ENCODE measurements at regions of chr1 and their contacts with region 1.

Region 1: GRCh38 chr1:85259118-85259911 is at the start of gene C1orf52:
- DNase-seq: peak; percentile 90
- ATAC-seq: peak; percentile 94
- H3K4me3 ChIP-seq: peak within 1 kb of the TSS; percentile 83
- H3K27ac ChIP-seq: peak within 1 kb of the TSS; percentile 85
- H3K4me1 ChIP-seq: peaks cover 3% of the 10 kb centered on the region; the same call in 1 of the 2 replicates
- H3K27me3 ChIP-seq: no peaks in the 10 kb centered on the region
- CTCF ChIP-seq: peak; percentile 95
- POLR2A ChIP-seq: peak; percentile 81
- RAD21 ChIP-seq: peak; percentile 58
- total RNA-seq, gene C1orf52: 16.3 and 23.1 TPM in 2 replicates

Region 2: DNA sequence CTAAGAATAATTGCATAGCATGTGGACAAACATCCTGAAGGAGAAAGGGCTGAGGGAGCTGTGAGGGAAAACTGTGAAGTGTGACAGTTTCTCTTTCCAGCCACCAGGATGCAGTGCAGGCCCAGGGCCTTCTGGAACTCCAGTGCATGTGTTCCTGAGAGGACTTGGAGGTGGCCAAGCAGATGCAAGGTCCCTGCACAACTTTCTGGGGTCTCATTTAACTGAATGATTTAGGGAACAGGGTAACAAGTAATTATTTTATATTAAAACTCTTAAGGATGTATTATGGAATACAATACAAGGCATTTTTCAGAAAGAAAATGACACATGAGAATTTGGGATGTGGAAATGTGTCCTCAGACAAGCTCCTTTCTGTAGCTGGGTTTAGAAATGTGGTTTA is 149.8 kb before region 1 on chr1:
- CTCF ChIA-PET with region 1: interaction called, 20 read pairs
- POLR2A ChIA-PET with region 1: no interaction called
- dilution Hi-C with region 1: no loop called
- in situ Hi-C with region 1: no loop called
- intact Hi-C with region 1: loop called (anchors 1 kb)
- DNase-seq: peak; percentile 75
- ATAC-seq: peak; percentile 99
- H3K4me3 ChIP-seq: no peak overlapping the region
- H3K27ac ChIP-seq: no peak overlapping the region
- H3K4me1 ChIP-seq: no peaks in the 10 kb centered on the region
- H3K27me3 ChIP-seq: no peaks in the 10 kb centered on the region
- CTCF ChIP-seq: peak; percentile 92
- POLR2A ChIP-seq: no peak
- RAD21 ChIP-seq: peak; percentile 94

Region 3: GRCh38 chr1:85200870-85201339 is 58.4 kb before region 1 on chr1 and contains the start of gene SYDE2:
- CTCF ChIA-PET with region 1: interaction called, 3 read pairs
- POLR2A ChIA-PET with region 1: no interaction called
- dilution Hi-C with region 1: no loop called
- in situ Hi-C with region 1: no loop called
- intact Hi-C with region 1: loop called (anchors 1 kb)
- DNase-seq: peak; percentile 58
- ATAC-seq: peak; percentile 90
- H3K4me3 ChIP-seq: peak within 1 kb of the TSS; percentile 73
- H3K27ac ChIP-seq: peak within 1 kb of the TSS; percentile 88
- H3K4me1 ChIP-seq: peaks cover 6% of the 10 kb centered on the region
- H3K27me3 ChIP-seq: no peaks in the 10 kb centered on the region
- CTCF ChIP-seq: no peak
- POLR2A ChIP-seq: peak; percentile 40; the same call in 1 of the 2 replicates
- RAD21 ChIP-seq: no peak
- total RNA-seq, gene SYDE2: 10.0 and 11.7 TPM in 2 replicates

Region 4: GRCh38 chr1:85240174-85240601 is 19.1 kb before region 1 on chr1:
- CTCF ChIA-PET with region 1: interaction called, 12 read pairs
- POLR2A ChIA-PET with region 1: no interaction called
- dilution Hi-C with region 1: no loop called
- in situ Hi-C with region 1: no loop called
- intact Hi-C with region 1: no loop called
- DNase-seq: peak; percentile 18
- ATAC-seq: peak; percentile 68
- H3K4me3 ChIP-seq: no peak overlapping the region
- H3K27ac ChIP-seq: peak overlapping the region; percentile 37; the same call in 1 of the 2 replicates
- H3K4me1 ChIP-seq: peaks cover 22% of the 10 kb centered on the region
- H3K27me3 ChIP-seq: peaks cover 2% of the 10 kb centered on the region; the same call in 1 of the 2 replicates
- CTCF ChIP-seq: peak; percentile 25
- POLR2A ChIP-seq: no peak
- RAD21 ChIP-seq: peak; percentile 28

Region 5: GRCh38 chr1:85330711-85331290 is 71.5 kb after region 1 on chr1:
- CTCF ChIA-PET with region 1: no interaction called
- POLR2A ChIA-PET with region 1: no interaction called
- dilution Hi-C with region 1: no loop called
- in situ Hi-C with region 1: no loop called
- intact Hi-C with region 1: no loop called
- DNase-seq: peak; percentile 99
- ATAC-seq: peak; percentile 62
- H3K4me3 ChIP-seq: no peak overlapping the region
- H3K27ac ChIP-seq: peak overlapping the region; percentile 86
- H3K4me1 ChIP-seq: peaks cover 36% of the 10 kb centered on the region
- H3K27me3 ChIP-seq: no peaks in the 10 kb centered on the region
- CTCF ChIP-seq: no peak
- POLR2A ChIP-seq: peak; percentile 16; the same call in 1 of the 2 replicates
- RAD21 ChIP-seq: no peak

Region 6: GRCh38 chr1:85406887-85407533 is 147.7 kb after region 1 on chr1:
- CTCF ChIA-PET with region 1: no interaction called
- POLR2A ChIA-PET with region 1: no interaction called
- dilution Hi-C with region 1: no loop called
- in situ Hi-C with region 1: no loop called
- intact Hi-C with region 1: no loop called
- DNase-seq: peak; percentile 94
- ATAC-seq: peak; percentile 93
- H3K4me3 ChIP-seq: no peak overlapping the region; the same call in 1 of the 2 replicates
- H3K27ac ChIP-seq: no peak overlapping the region
- H3K4me1 ChIP-seq: peaks cover 10% of the 10 kb centered on the region
- H3K27me3 ChIP-seq: no peaks in the 10 kb centered on the region
- CTCF ChIP-seq: no peak
- POLR2A ChIP-seq: no peak
- RAD21 ChIP-seq: 0 out of 2 replicates have a peak, but pooled peaks have one; percentile 10